Mammary epithelial cell (primary cell): ENCODE measurements at regions of chr9 and their contacts with region 1.

Region 1: GRCh38 chr9:38732885-38733284 is 13.0 kb upstream of the FAM240B start:
- DNase-seq: no peak
- H3K4me3 ChIP-seq: no peak overlapping the region
- H3K27ac ChIP-seq: no peak overlapping the region
- H3K4me1 ChIP-seq: no peaks in the 10 kb centered on the region
- H3K27me3 ChIP-seq: no peaks in the 10 kb centered on the region
- CTCF ChIP-seq: no peak

Region 2: DNA sequence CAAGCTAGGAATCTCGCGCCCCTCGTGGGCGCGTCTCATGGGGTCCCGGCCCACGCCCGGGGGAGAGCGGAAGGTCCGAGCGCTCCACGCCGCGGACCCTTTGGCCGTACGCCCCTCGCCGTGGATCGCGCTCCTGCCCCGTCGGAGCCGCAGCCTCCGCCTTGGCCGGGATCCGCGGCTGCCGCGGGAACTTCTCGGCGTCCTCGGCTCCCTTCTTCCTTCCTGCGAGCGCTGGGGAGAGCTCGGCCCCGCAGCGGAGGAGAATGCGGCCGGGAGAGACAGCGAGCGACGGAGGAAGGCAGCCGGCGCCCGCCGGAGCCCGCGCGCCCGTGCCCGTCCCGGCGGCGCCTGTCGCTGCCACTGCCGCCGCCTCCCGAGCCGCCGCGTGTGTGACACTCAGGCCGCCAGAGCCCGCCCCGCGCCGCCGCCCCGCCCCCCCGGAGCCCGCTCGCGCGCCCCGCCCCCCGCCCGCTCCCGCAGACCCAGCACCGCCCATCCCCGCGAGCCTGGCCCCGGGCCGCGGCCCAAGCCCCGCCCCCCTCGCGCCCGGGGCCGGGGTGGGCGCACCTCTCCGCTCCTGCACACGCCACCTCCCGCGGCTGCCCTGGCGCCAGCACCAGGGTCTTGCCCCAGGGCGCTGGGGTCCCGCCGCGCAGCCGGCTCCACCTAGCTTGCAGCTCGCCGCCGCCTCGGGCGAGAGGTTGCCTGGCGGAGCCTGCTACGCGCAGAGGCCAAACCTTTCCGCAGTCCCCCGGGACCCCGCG is 663.8 kb before region 1 on chr9 and contains the start of gene SHB:
- CTCF ChIA-PET with region 1: no interaction called
- dilution Hi-C with region 1: no loop called
- in situ Hi-C with region 1: no loop called
- intact Hi-C with region 1: no loop called
- DNase-seq: peak; percentile 58
- H3K4me3 ChIP-seq: peak within 1 kb of the TSS; percentile 79 to 90 (median 84)
- H3K27ac ChIP-seq: peak within 1 kb of the TSS; percentile 44
- H3K4me1 ChIP-seq: peaks cover 21% of the 10 kb centered on the region
- H3K27me3 ChIP-seq: no peaks in the 10 kb centered on the region
- CTCF ChIP-seq: no peak
- total RNA-seq, gene SHB: 30.5 to 31.5 TPM

Region 3: DNA sequence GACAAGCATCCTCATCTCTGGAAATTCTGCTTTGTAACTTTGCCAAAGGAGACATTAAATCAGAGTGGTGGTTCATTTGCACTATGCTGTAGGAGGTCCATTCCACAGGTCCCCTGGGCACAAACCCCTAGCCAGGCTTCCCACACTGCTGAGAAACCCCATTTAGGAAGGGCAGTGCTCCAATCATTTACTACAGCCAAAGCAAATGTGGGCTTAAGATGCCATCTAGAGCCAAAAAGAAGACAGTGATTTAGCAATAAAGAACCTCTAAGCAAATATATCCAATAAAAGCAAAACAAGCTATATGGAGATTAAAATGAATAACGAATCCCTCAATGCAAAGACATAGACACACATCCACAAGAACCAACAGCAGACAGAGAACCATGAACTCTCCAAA is 469.4 kb before region 1 on chr9:
- CTCF ChIA-PET with region 1: no interaction called
- dilution Hi-C with region 1: no loop called
- in situ Hi-C with region 1: no loop called
- intact Hi-C with region 1: no loop called
- DNase-seq: peak; percentile 31
- H3K4me3 ChIP-seq: no peak overlapping the region
- H3K27ac ChIP-seq: no peak overlapping the region
- H3K4me1 ChIP-seq: no peaks in the 10 kb centered on the region
- H3K27me3 ChIP-seq: no peaks in the 10 kb centered on the region
- CTCF ChIP-seq: peak; percentile 41 to 61

Region 4: GRCh38 chr9:38747067-38747466 is 14.2 kb after region 1 on chr9:
- CTCF ChIA-PET with region 1: no interaction called
- dilution Hi-C with region 1: no loop called
- in situ Hi-C with region 1: no loop called
- intact Hi-C with region 1: loop called (anchors 2 kb)
- DNase-seq: no peak
- H3K4me3 ChIP-seq: no peak overlapping the region
- H3K27ac ChIP-seq: no peak overlapping the region
- H3K4me1 ChIP-seq: no peaks in the 10 kb centered on the region
- H3K27me3 ChIP-seq: no peaks in the 10 kb centered on the region
- CTCF ChIP-seq: no peak

Region 5: DNA sequence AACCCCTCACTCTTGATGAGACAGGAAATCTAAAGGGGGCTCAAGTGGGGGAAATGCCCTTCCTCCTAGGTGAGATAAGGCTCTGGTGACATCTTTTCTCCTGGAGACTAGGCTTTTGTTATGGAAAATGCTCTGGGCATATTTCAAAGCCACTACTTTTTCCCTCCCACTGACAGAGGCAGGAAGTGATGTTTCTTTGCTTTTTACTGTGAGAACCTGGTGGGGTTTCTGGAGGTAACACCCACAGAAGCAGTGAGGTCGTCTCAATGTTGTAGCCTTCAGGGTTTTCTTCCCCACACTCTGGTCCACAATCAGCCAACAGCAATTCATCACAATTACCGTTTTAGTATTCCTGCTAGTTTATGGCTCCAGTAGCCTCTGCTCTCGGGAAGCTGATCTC is 28.4 kb after region 1 on chr9:
- CTCF ChIA-PET with region 1: no interaction called
- dilution Hi-C with region 1: no loop called
- in situ Hi-C with region 1: no loop called
- intact Hi-C with region 1: loop called (anchors 2 kb)
- DNase-seq: no peak
- H3K4me3 ChIP-seq: no peak overlapping the region
- H3K27ac ChIP-seq: no peak overlapping the region
- H3K4me1 ChIP-seq: no peaks in the 10 kb centered on the region
- H3K27me3 ChIP-seq: no peaks in the 10 kb centered on the region
- CTCF ChIP-seq: no peak